ENCODE measurements at regions of chr6 and their contacts with region 1.

Region 1: DNA sequence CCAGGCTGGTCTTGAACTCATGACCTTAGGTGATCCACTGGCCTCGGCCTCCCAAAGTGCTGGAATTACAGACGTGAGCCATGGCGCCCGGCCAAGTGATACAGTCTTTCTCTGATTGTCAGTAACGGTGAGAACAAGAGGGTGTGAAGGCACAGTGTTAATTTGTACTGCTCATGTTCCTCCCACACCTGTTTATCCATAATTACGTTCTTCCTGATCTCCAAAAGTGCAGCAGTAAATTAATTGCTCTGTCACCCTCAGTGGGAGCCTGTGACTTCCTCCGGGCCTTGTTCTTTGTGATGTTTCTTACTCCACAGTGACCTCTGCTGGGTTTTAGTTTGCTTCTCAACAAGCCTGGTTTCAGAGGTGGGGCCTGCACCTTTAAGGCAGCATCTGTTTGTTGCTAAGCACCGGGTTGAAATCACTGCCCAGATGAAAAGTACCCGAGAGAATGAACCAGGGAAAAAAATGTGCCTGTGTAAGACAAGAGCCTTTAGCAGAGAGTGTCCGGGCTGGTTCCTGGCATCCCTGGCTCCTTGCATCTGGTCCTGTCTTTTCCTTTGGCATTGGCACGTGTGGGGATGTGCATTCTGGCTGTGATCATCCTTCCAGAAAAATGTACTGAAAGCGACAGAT is 89.1 kb upstream of the CLDN20 start:
- DNase-seq: no peak
- ATAC-seq: peak; percentile 72
- H3K4me3 ChIP-seq: no peak overlapping the region
- H3K27ac ChIP-seq: no peak overlapping the region
- H3K4me1 ChIP-seq: peaks cover 25% of the 10 kb centered on the region
- H3K27me3 ChIP-seq: no peaks in the 10 kb centered on the region
- CTCF ChIP-seq: peak; percentile 56 to 80 (median 71); a peak in 5 of 6 replicates
- EP300 ChIP-seq: no peak
- POLR2A ChIP-seq: no peak
- RAD21 ChIP-seq: peak; percentile 93

Region 2: DNA sequence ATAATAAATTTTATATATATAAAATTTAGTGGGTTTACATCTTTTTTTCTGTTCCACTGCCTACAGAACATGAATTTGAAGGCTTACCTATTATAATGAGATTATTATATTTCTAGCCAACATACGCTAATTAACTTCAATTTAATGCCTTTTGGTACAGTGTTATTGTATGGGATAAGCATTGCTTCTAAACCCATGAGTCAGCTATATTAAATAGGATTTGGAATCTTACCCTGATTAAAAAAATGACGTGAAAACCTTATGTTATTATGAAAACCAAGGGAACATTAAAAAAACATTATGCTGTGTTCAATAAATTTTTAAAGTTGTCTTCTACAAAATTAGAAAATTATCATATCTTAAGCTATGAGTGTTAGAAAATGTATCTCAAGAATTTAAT is 1709.6 kb before region 1 on chr6:
- CTCF ChIA-PET with region 1: no interaction called
- POLR2A ChIA-PET with region 1: no interaction called
- RAD21 ChIA-PET with region 1: no interaction called
- SMC1A ChIA-PET with region 1: no interaction called
- in situ Hi-C with region 1: no loop called
- intact Hi-C with region 1: no loop called
- DNase-seq: no peak
- ATAC-seq: no peak
- H3K4me3 ChIP-seq: no peak overlapping the region
- H3K27ac ChIP-seq: no peak overlapping the region
- H3K4me1 ChIP-seq: no peaks in the 10 kb centered on the region
- H3K27me3 ChIP-seq: no peaks in the 10 kb centered on the region
- CTCF ChIP-seq: no peak
- EP300 ChIP-seq: no peak
- POLR2A ChIP-seq: no peak
- RAD21 ChIP-seq: no peak

Region 3: DNA sequence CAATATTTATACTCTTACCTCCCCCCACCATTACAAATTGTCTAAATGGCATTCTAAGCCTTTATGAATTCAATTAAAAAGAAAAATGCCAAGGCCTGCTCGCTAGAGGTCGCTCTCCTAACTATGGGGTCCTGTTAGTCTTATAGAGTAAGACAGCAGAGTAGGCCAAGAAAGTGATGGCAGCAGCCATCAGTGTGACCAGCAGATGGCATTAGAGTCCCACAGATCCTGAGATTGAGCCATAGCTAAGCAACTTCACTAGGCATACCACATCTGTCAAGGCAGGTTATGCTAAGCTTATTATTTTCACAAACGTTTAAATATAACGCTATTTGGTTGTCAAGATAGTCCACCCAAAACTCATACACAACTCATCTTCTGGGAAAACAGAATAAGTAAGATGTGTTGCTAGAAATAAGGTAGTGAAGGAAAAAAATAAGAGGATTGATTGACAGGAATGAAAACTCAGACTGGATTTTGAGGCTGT is 499.0 kb before region 1 on chr6:
- CTCF ChIA-PET with region 1: interaction called, 54 read pairs
- POLR2A ChIA-PET with region 1: no interaction called
- RAD21 ChIA-PET with region 1: interaction called, 10 read pairs
- SMC1A ChIA-PET with region 1: interaction called, 37 read pairs
- in situ Hi-C with region 1: loop called (anchors 5 kb)
- intact Hi-C with region 1: loop called (anchors 1 kb)
- DNase-seq: peak; percentile 97
- ATAC-seq: peak; percentile 100
- H3K4me3 ChIP-seq: no peak overlapping the region
- H3K27ac ChIP-seq: no peak overlapping the region
- H3K4me1 ChIP-seq: no peaks in the 10 kb centered on the region
- H3K27me3 ChIP-seq: no peaks in the 10 kb centered on the region
- CTCF ChIP-seq: peak; percentile 98 to 100 (median 100); a peak in 5 of 6 replicates
- EP300 ChIP-seq: no peak
- POLR2A ChIP-seq: no peak
- RAD21 ChIP-seq: peak; percentile 97

Region 4: GRCh38 chr6:154928325-154928922 is 246.3 kb before region 1 on chr6:
- CTCF ChIA-PET with region 1: interaction called, 206 read pairs
- POLR2A ChIA-PET with region 1: interaction called, 9 read pairs
- RAD21 ChIA-PET with region 1: interaction called, 116 read pairs
- SMC1A ChIA-PET with region 1: interaction called, 150 read pairs
- in situ Hi-C with region 1: loop called (anchors 5 kb)
- intact Hi-C with region 1: loop called (anchors 1 kb)
- DNase-seq: peak; percentile 12
- ATAC-seq: peak; percentile 94
- H3K4me3 ChIP-seq: no peak overlapping the region
- H3K27ac ChIP-seq: no peak overlapping the region
- H3K4me1 ChIP-seq: 0 out of 2 replicates have a peak, but pooled peaks cover 2% of the 10 kb centered on the region
- H3K27me3 ChIP-seq: no peaks in the 10 kb centered on the region
- CTCF ChIP-seq: peak; percentile 72 to 90 (median 76)
- EP300 ChIP-seq: no peak
- POLR2A ChIP-seq: no peak
- RAD21 ChIP-seq: peak; percentile 98

Region 5: DNA sequence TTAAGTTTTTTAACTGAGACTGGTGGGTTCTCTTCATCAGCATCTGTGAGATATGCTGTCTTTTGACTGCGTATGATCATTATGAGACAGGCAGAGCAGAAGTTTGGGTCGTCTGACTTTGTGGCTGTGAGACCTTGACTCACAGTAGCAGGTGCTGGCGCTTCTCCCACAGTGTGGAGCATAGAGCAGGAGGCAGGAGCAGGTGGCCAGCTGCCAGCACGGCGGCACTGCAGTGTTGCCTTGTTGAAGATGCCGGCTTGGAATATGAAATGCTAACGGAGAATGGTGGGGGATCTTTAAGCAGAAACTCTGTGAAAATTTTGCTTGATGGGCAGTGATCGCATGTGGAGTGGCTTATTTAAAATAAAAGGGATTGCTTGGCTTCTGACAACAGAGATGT is 74.6 kb before region 1 on chr6:
- CTCF ChIA-PET with region 1: no interaction called
- POLR2A ChIA-PET with region 1: no interaction called
- RAD21 ChIA-PET with region 1: no interaction called
- SMC1A ChIA-PET with region 1: interaction called, 3 read pairs
- in situ Hi-C with region 1: no loop called
- intact Hi-C with region 1: loop called (anchors 5 kb)
- DNase-seq: no peak
- ATAC-seq: no peak
- H3K4me3 ChIP-seq: no peak overlapping the region
- H3K27ac ChIP-seq: no peak overlapping the region
- H3K4me1 ChIP-seq: no peaks in the 10 kb centered on the region
- H3K27me3 ChIP-seq: no peaks in the 10 kb centered on the region
- CTCF ChIP-seq: no peak
- EP300 ChIP-seq: no peak
- POLR2A ChIP-seq: no peak
- RAD21 ChIP-seq: no peak

Region 6: GRCh38 chr6:155248008-155249001 is 73.6 kb after region 1 on chr6:
- CTCF ChIA-PET with region 1: interaction called, 228 read pairs
- POLR2A ChIA-PET with region 1: interaction called, 8 read pairs
- RAD21 ChIA-PET with region 1: interaction called, 178 read pairs
- SMC1A ChIA-PET with region 1: interaction called, 224 read pairs
- in situ Hi-C with region 1: loop called (anchors 5 kb)
- intact Hi-C with region 1: loop called (anchors 1 kb)
- DNase-seq: peak; percentile 36
- ATAC-seq: peak; percentile 88
- H3K4me3 ChIP-seq: no peak overlapping the region
- H3K27ac ChIP-seq: no peak overlapping the region
- H3K4me1 ChIP-seq: peaks cover 4% of the 10 kb centered on the region; the same call in 1 of the 2 replicates
- H3K27me3 ChIP-seq: no peaks in the 10 kb centered on the region
- CTCF ChIP-seq: peak; percentile 67 to 70 (median 69); a peak in 5 of 6 replicates
- EP300 ChIP-seq: no peak
- POLR2A ChIP-seq: no peak
- RAD21 ChIP-seq: peak; percentile 92

Region 7: DNA sequence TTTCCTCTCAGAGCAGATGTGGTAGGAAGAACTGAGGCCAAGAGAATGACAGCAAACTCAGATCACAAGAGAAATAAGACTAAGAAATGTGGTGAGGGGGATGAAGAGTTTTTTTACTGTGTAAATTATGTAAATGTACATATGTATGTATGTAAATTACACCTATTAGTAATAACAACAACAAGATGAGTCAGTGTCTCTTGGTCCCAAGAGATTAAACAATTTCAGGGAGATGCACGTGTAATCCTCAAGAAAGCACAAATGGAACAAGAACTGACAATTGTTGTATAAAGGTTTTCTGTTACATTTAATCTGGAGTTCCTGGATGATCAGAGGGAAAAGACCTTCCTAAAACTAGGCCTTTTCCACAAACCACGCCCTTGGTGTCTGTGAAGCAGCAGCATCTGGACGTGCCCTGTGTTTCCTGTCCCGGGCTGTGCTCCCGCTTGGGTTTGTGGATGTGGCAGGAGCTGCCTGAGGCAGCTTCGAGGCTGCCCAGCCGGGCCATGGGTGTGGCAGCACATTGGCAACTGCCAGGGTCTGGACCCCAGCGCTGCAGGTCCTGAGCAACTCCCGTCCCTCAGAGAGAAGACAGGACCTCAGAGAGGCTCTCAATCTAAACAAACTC is 90.1 kb after region 1 on chr6:
- CTCF ChIA-PET with region 1: interaction called, 19 read pairs
- POLR2A ChIA-PET with region 1: interaction called, 3 read pairs
- RAD21 ChIA-PET with region 1: interaction called, 5 read pairs
- SMC1A ChIA-PET with region 1: interaction called, 10 read pairs
- in situ Hi-C with region 1: no loop called
- intact Hi-C with region 1: loop called (anchors 5 kb)
- DNase-seq: no peak
- ATAC-seq: no peak
- H3K4me3 ChIP-seq: no peak overlapping the region
- H3K27ac ChIP-seq: no peak overlapping the region
- H3K4me1 ChIP-seq: peaks cover 17% of the 10 kb centered on the region
- H3K27me3 ChIP-seq: no peaks in the 10 kb centered on the region
- CTCF ChIP-seq: no peak
- EP300 ChIP-seq: no peak
- POLR2A ChIP-seq: no peak
- RAD21 ChIP-seq: no peak

Region 8: DNA sequence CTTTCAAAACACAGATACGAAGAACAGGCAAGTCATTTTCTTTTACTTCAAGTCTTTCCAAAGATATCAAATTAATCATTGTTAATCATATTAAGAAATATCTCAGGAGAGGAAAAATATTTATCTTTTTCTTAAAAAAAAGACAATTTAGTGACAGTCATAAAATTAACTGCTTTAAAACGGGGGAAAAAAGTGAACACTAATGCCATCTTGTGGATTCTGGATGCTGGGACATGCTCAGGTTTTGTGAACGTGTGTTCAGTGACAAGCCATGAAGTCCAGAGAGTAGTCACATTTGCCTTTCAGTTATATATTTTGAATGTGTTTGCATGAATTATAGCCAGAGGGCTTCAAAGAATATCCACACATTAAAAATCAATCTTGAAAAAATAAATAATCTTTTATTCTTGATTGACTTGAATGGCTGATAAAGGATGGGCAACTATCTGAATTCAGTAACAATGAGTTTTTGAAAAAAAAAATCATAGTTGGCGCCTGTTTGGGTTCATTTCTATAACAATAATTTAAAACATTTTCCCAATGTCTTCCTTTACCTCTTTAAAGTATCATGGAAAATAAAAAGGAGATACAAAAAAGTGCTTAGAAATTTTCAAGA is 355.6 kb after region 1 on chr6:
- CTCF ChIA-PET with region 1: interaction called, 6 read pairs
- POLR2A ChIA-PET with region 1: no interaction called
- RAD21 ChIA-PET with region 1: no interaction called
- SMC1A ChIA-PET with region 1: interaction called, 7 read pairs
- in situ Hi-C with region 1: no loop called
- intact Hi-C with region 1: loop called (anchors 10 kb)
- DNase-seq: no peak
- ATAC-seq: peak; percentile 89
- H3K4me3 ChIP-seq: no peak overlapping the region
- H3K27ac ChIP-seq: no peak overlapping the region
- H3K4me1 ChIP-seq: no peaks in the 10 kb centered on the region
- H3K27me3 ChIP-seq: no peaks in the 10 kb centered on the region
- CTCF ChIP-seq: peak; percentile 66 to 76 (median 76); a peak in 5 of 6 replicates
- EP300 ChIP-seq: no peak
- POLR2A ChIP-seq: no peak
- RAD21 ChIP-seq: peak; percentile 89

Measured in GM12878 (cell line).